WTC11 (cell line): ENCODE measurements at regions of chr16 and their contacts with region 1.

Region 1: GRCh38 chr16:4624015-4624826 is at the start of gene MGRN1:
- DNase-seq: peak; percentile 94
- ATAC-seq: peak; percentile 93
- H3K4me3 Mint-ChIP-seq: peak within 1 kb of the TSS; percentile 97
- H3K27ac Mint-ChIP-seq: peak within 1 kb of the TSS; percentile 97
- H3K4me1 Mint-ChIP-seq: peaks cover 17% of the 10 kb centered on the region
- H3K27me3 Mint-ChIP-seq: no peaks in the 10 kb centered on the region
- CTCF ChIP-seq: peak; percentile 84
- total RNA-seq, gene MGRN1: 79.4 to 88.8 TPM (median 80.7 TPM) in 3 replicates

Region 2: GRCh38 chr16:4506450-4506849 is 117.8 kb before region 1 on chr16:
- CTCF ChIA-PET with region 1: interaction called, 19 read pairs
- POLR2A ChIA-PET with region 1: no interaction called
- DNase-seq: peak; percentile 51
- ATAC-seq: peak; percentile 88
- H3K4me3 Mint-ChIP-seq: no peak overlapping the region
- H3K27ac Mint-ChIP-seq: peak overlapping the region; percentile 13
- H3K4me1 Mint-ChIP-seq: peaks cover 6% of the 10 kb centered on the region; the same call in 1 of the 2 replicates
- H3K27me3 Mint-ChIP-seq: no peaks in the 10 kb centered on the region; the same call in 1 of the 2 replicates
- CTCF ChIP-seq: peak; percentile 88

Region 3: GRCh38 chr16:4634768-4635167 is 10.5 kb after region 1 on chr16:
- CTCF ChIA-PET with region 1: interaction called, 26 read pairs
- POLR2A ChIA-PET with region 1: interaction called, 3 read pairs
- DNase-seq: no peak
- ATAC-seq: no peak
- H3K4me3 Mint-ChIP-seq: no peak overlapping the region
- H3K27ac Mint-ChIP-seq: peak overlapping the region; percentile 74; the same call in 1 of the 2 replicates
- H3K4me1 Mint-ChIP-seq: 0 out of 2 replicates have a peak, but pooled peaks cover 4% of the 10 kb centered on the region
- H3K27me3 Mint-ChIP-seq: no peaks in the 10 kb centered on the region
- CTCF ChIP-seq: no peak

Region 4: DNA sequence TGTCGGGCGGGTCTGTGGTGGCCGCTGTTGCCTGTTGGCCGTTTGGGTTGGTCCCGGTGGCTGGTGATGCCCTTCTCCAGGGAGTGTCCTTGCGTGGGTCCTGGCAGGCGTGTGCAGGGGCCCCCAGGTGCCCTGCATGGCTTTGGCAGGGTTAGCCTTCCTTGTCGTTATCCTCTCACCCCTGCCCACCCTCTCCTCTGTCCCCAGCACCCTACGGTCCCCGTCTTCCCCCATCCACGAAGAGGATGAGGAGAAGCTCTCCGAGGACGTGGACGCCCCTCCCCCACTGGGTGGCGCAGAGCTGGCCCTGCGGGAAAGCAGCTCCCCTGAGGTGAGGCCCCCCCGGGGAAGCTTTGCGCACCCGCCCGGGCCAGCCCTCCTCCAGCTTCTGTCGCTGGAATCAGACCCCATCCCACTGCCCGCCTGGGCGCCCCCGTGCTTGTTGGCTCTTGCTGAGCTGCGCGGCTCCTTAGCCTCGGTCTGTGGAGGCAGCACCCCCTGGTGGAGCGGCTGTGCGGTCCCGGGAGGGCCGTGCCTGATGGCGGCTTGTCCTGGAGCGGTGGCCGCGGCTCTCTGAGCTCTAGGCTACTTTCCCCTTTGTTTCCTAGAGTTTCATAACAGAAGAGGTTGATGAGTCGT is 58.5 kb after region 1 on chr16:
- CTCF ChIA-PET with region 1: interaction called, 17 read pairs
- POLR2A ChIA-PET with region 1: no interaction called
- DNase-seq: peak; percentile 86
- ATAC-seq: peak; percentile 92
- H3K4me3 Mint-ChIP-seq: no peak overlapping the region
- H3K27ac Mint-ChIP-seq: no peak overlapping the region
- H3K4me1 Mint-ChIP-seq: no peaks in the 10 kb centered on the region
- H3K27me3 Mint-ChIP-seq: no peaks in the 10 kb centered on the region
- CTCF ChIP-seq: peak; percentile 49; the same call in 1 of the 2 replicates

Region 5: GRCh38 chr16:4693296-4693955 is 69.2 kb after region 1 on chr16 and contains the start of gene NUDT16L1:
- CTCF ChIA-PET with region 1: interaction called, 10 read pairs
- POLR2A ChIA-PET with region 1: no interaction called
- DNase-seq: peak; percentile 96
- ATAC-seq: peak; percentile 88
- H3K4me3 Mint-ChIP-seq: peak within 1 kb of the TSS; percentile 69
- H3K27ac Mint-ChIP-seq: peak within 1 kb of the TSS; percentile 19; the same call in 1 of the 2 replicates
- H3K4me1 Mint-ChIP-seq: no peaks in the 10 kb centered on the region
- H3K27me3 Mint-ChIP-seq: no peaks in the 10 kb centered on the region
- CTCF ChIP-seq: no peak
- total RNA-seq, gene NUDT16L1: 41.8 to 45.8 TPM (median 42.0 TPM) in 3 replicates

Region 6: GRCh38 chr16:4706871-4707270 is 82.7 kb after region 1 on chr16:
- CTCF ChIA-PET with region 1: no interaction called
- POLR2A ChIA-PET with region 1: no interaction called
- DNase-seq: no peak
- ATAC-seq: no peak
- H3K4me3 Mint-ChIP-seq: no peak overlapping the region
- H3K27ac Mint-ChIP-seq: peak overlapping the region; percentile 77
- H3K4me1 Mint-ChIP-seq: no peaks in the 10 kb centered on the region
- H3K27me3 Mint-ChIP-seq: no peaks in the 10 kb centered on the region
- CTCF ChIP-seq: no peak

Region 7: DNA sequence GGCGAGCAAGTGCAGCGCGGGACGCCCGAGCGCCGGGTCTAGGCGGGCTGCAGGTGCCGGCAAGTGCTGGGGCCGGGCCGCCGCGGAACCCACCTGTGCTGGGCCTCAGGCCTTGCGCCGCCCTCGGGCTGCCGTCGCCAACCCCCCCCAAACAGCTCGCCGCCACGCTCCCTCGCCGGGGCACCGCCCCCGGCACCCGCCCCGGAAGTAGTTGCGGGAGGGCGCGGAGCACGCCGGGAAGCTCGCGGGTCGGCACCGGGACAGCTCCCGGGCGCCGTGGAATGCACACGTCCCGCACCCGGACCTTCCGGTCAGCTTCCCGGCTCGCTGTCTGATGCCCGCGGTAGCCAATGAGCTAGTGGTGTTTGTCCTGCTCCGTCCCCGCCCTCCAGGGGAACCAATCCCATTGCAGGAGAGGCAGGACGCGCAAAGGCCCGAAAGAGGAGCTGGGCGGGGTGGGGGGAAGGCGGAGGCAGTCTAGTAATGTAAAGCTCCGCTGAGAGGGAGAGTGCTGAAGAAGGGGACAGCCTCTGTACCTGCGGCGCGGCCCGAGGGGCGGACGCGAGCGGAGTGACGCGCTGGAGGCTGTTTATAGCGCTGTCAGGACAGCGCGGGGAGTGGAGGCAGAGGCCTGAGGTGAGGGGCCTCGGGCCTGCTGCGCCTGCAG is 110.0 kb after region 1 on chr16 and contains the starts of genes ANKS3 and DNAAF8:
- CTCF ChIA-PET with region 1: interaction called, 11 read pairs
- POLR2A ChIA-PET with region 1: no interaction called
- DNase-seq: peak; percentile 95
- ATAC-seq: peak; percentile 94
- H3K4me3 Mint-ChIP-seq: peak within 1 kb of the TSS; percentile 93
- H3K27ac Mint-ChIP-seq: peak within 1 kb of the TSS; percentile 97
- H3K4me1 Mint-ChIP-seq: peaks cover 9% of the 10 kb centered on the region
- H3K27me3 Mint-ChIP-seq: peaks cover 4% of the 10 kb centered on the region; the same call in 1 of the 2 replicates
- CTCF ChIP-seq: no peak
- total RNA-seq, gene ANKS3: 28.6 to 35.6 TPM (median 31.5 TPM) in 3 replicates
- total RNA-seq, gene DNAAF8: 0.09 to 0.41 TPM (median 0.14 TPM) in 3 replicates

Region 8: DNA sequence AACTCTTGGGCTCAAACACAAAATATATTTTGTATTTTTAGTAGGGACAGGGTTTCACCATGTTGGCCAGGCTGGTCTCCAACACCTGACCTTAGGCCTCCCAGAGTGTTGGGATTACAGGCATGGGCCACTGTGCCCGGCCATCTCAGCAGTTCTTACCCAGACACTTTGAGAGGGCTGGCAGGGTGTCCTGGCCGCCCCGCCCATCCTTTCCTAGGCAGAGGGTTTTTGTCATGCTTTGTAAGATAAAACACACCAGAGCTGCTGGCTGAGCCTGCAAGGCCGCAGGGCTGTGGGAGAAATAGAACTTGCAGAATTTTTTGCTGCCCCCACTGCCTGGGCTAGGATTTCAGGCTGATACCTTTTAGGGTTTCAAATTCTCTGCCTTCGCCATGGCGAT is 304.0 kb after region 1 on chr16:
- CTCF ChIA-PET with region 1: no interaction called
- POLR2A ChIA-PET with region 1: interaction called, 14 read pairs
- DNase-seq: no peak
- ATAC-seq: no peak
- H3K4me3 Mint-ChIP-seq: no peak overlapping the region
- H3K27ac Mint-ChIP-seq: no peak overlapping the region
- H3K4me1 Mint-ChIP-seq: peaks cover 27% of the 10 kb centered on the region
- H3K27me3 Mint-ChIP-seq: no peaks in the 10 kb centered on the region; the same call in 1 of the 2 replicates
- CTCF ChIP-seq: no peak